ENCODE measurements at regions of chr3 and their contacts with region 1.

Region 1: GRCh38 chr3:69324362-69325025 is 61.4 kb downstream of the FRMD4B start:
- DNase-seq: peak in 1 of 2 donors; percentile 45
- ATAC-seq: peak; percentile 48 to 63 (median 61)
- H3K4me3 ChIP-seq: no peak overlapping the region
- H3K4me3 Mint-ChIP-seq: no peak overlapping the region
- H3K27ac ChIP-seq: no peak overlapping the region
- H3K27ac Mint-ChIP-seq: peak overlapping the region in 1 of 2 donors; percentile 4
- H3K4me1 ChIP-seq: peaks cover 7% of the 10 kb centered on the region
- H3K4me1 Mint-ChIP-seq: peaks cover 39 to 43% of the 10 kb centered on the region in 2 donors
- H3K27me3 ChIP-seq: no peaks in the 10 kb centered on the region
- H3K27me3 Mint-ChIP-seq: peaks cover 0 to 2% of the 10 kb centered on the region in 2 donors
- CTCF ChIP-seq: peak; percentile 41

Region 2: GRCh38 chr3:69410250-69410649 is 85.8 kb after region 1 on chr3:
- intact Hi-C with region 1: loop called (anchors 1 kb)
- DNase-seq: peak; percentile 43 to 79
- ATAC-seq: peak; percentile 86 to 99 (median 98)
- H3K4me3 ChIP-seq: no peak overlapping the region
- H3K4me3 Mint-ChIP-seq: no peak overlapping the region
- H3K27ac ChIP-seq: no peak overlapping the region
- H3K27ac Mint-ChIP-seq: no peak overlapping the region
- H3K4me1 ChIP-seq: no peaks in the 10 kb centered on the region
- H3K4me1 Mint-ChIP-seq: peaks cover 0 to 6% of the 10 kb centered on the region in 2 donors
- H3K27me3 ChIP-seq: no peaks in the 10 kb centered on the region
- H3K27me3 Mint-ChIP-seq: peaks cover 0 to 3% of the 10 kb centered on the region in 2 donors
- CTCF ChIP-seq: peak; percentile 88

Measured in natural killer cell (primary cell).